CD8-positive, alpha-beta T cell (primary cell): ENCODE measurements at regions of chr2 and their contacts with region 1.

Region 1: DNA sequence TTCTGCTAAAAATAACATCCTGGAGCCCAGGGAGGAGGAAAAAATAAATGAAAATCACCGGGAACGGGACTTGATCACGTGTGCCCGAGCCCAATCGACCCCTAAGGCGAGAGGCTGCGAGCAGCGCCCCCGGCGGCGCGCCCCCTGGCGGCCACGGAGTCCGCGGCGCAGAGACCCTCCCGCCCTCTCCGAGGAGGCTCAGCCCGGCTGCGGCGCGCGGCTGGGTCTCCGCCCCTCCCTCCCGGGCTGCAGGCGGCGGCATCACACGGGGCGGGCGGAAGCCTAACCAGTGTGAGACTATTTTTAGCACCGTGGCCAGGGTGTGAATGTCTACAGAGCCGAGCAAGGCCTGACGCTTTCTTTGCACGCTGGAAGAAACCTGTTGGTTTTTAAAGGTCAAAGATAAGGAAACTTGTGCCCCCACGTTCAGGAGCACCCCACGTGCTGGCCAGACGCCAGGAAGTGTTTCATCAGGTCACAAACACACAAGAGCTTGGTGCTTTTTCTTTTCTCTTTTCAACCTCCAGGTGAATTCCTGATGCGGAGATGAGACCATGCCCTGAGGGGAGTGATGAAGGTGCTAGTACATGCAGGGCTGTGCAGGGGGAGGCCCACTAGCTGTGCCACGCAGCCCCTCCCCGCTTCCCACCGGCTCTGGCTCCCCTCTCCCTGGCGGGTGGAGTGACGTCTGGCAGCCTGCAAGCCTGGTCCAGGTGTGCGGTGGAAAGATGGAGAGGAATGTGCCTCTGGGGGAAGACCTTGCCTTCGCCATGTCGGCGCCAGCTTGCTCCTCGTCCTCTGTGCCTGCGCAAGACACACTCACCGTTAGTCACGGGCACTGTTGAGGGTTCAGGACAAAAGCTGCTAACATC is 35.3 kb upstream of the DNMT3A start:
- DNase-seq: peak; percentile 83 to 98 (median 92)
- ATAC-seq: peak; percentile 97
- H3K4me3 ChIP-seq: peak overlapping the region; percentile 11 to 36
- H3K4me3 Mint-ChIP-seq: peak overlapping the region; percentile 72
- H3K27ac ChIP-seq: peak overlapping the region; percentile 36 to 69
- H3K27ac Mint-ChIP-seq: peak overlapping the region; percentile 95
- H3K4me1 ChIP-seq: peaks cover 33% of the 10 kb centered on the region
- H3K4me1 Mint-ChIP-seq: peaks cover 35% of the 10 kb centered on the region
- H3K27me3 ChIP-seq: no peaks in the 10 kb centered on the region
- H3K27me3 Mint-ChIP-seq: no peaks in the 10 kb centered on the region
- CTCF ChIP-seq: peak; percentile 98

Region 2: GRCh38 chr2:25177211-25177611 is 199.8 kb before region 1 on chr2:
- CTCF ChIA-PET with region 1: no interaction called
- POLR2A ChIA-PET with region 1: no interaction called
- intact Hi-C with region 1: no loop called
- DNase-seq: no peak
- ATAC-seq: no peak
- H3K4me3 ChIP-seq: no peak overlapping the region
- H3K4me3 Mint-ChIP-seq: no peak overlapping the region
- H3K27ac ChIP-seq: no peak overlapping the region
- H3K27ac Mint-ChIP-seq: no peak overlapping the region
- H3K4me1 ChIP-seq: no peaks in the 10 kb centered on the region
- H3K4me1 Mint-ChIP-seq: no peaks in the 10 kb centered on the region
- H3K27me3 ChIP-seq: peaks cover 0 to 4% of the 10 kb centered on the region in 2 experiments
- H3K27me3 Mint-ChIP-seq: peaks cover 20% of the 10 kb centered on the region
- CTCF ChIP-seq: no peak

Region 3: DNA sequence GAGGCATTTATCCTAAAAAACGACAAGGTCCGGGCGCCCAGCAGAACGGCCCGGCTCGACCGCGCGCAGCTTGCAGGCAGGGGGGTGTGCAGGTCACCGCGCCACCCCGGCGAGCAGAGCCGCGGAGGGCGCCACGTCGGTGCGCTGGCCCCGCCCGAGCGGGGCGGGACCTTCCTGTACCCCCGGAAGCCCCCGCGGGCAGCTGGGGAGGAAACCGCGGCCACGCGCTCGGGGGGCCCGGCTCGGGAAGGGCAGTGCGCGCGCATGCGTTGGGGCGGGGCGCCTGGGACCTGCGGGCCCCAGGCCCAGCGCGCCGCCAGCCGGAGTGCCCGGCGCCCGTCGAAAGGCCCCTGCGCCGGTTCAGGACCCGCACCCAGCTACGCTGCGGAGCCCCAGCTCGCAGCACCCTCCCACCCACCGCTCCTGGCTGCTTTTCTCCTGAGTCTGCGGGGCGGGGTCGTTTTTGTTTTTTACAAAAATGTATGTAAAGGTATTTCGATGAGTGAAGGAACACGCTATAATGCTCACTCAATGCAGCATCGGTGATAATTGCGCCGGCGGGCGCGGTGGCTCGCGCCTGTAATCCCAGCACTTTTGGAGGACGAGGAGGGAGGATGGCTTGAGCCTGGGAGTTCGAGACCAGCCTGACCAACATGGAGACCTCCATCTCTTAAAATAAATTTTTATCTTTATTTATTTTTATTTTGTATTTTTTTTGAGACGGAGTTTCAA is 160.9 kb before region 1 on chr2:
- CTCF ChIA-PET with region 1: no interaction called
- POLR2A ChIA-PET with region 1: no interaction called
- intact Hi-C with region 1: loop called in 1 of 2 experiments (anchors 1 kb)
- DNase-seq: peak; percentile 64 to 96 (median 88)
- ATAC-seq: peak; percentile 95
- H3K4me3 ChIP-seq: peak overlapping the region; percentile 59 to 72
- H3K4me3 Mint-ChIP-seq: peak overlapping the region; percentile 77
- H3K27ac ChIP-seq: peak overlapping the region; percentile 68 to 72
- H3K27ac Mint-ChIP-seq: peak overlapping the region; percentile 80
- H3K4me1 ChIP-seq: peaks cover 7% of the 10 kb centered on the region
- H3K4me1 Mint-ChIP-seq: peaks cover 10% of the 10 kb centered on the region
- H3K27me3 ChIP-seq: no peaks in the 10 kb centered on the region
- H3K27me3 Mint-ChIP-seq: no peaks in the 10 kb centered on the region
- CTCF ChIP-seq: no peak

Region 4: GRCh38 chr2:25286025-25286400 is 91.0 kb before region 1 on chr2:
- CTCF ChIA-PET with region 1: interaction called, 10 read pairs
- POLR2A ChIA-PET with region 1: no interaction called
- intact Hi-C with region 1: no loop called
- DNase-seq: peak; percentile 45 to 88 (median 77)
- ATAC-seq: peak; percentile 99
- H3K4me3 ChIP-seq: peak overlapping the region; percentile 4 to 25
- H3K4me3 Mint-ChIP-seq: peak overlapping the region; percentile 60
- H3K27ac ChIP-seq: peak overlapping the region; percentile 72 to 78
- H3K27ac Mint-ChIP-seq: peak overlapping the region; percentile 98
- H3K4me1 ChIP-seq: peaks cover 70% of the 10 kb centered on the region
- H3K4me1 Mint-ChIP-seq: peaks cover 66% of the 10 kb centered on the region
- H3K27me3 ChIP-seq: no peaks in the 10 kb centered on the region
- H3K27me3 Mint-ChIP-seq: no peaks in the 10 kb centered on the region
- CTCF ChIP-seq: no peak

Region 5: DNA sequence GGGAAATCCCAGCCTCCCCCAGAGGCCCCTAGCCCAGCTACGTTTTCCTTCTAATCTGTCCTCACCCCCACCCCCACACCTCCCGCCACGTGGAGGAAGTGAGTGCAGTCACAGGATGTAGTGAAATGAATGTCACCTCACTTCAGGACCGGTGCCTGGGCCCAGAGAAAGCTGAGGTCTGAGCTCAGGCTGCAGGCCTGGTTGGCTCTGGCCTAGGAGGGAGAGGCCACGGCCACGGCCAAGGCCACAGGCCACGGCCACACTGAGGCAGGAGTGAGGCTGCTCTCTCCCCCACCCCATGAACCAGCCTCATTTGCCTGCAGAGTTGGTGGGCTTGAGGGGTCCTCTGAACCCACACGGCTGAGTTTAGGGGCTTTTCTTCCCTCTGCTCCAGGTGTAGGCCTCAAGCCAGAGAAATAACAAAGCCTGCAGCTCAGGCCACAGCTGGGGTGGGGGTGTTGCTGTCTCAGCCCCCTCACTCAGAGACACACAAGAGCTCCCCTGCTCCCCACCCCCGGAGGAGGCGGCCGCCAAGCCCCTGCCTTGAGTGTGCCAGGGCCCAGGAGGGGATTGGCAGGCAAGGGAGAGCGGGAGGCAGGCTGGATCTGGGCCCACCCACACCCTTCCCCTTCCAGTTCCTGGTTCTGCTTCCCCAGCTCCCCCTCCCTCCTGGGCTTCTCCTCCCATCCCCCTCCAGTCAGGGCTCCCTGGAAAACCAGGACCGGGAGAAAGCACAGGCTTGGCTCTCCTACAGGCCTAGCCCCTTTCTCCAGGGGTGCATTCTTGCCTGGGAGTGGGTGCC is 62.3 kb before region 1 on chr2:
- CTCF ChIA-PET with region 1: interaction called, 10 read pairs
- POLR2A ChIA-PET with region 1: interaction called, 4 read pairs
- intact Hi-C with region 1: loop called (anchors 1 kb)
- DNase-seq: peak; percentile 21 to 80 (median 69)
- ATAC-seq: peak; percentile 86
- H3K4me3 ChIP-seq: peak overlapping the region; percentile 34 to 46
- H3K4me3 Mint-ChIP-seq: peak overlapping the region; percentile 81
- H3K27ac ChIP-seq: peak overlapping the region; percentile 32 to 76
- H3K27ac Mint-ChIP-seq: peak overlapping the region; percentile 95
- H3K4me1 ChIP-seq: peaks cover 71% of the 10 kb centered on the region
- H3K4me1 Mint-ChIP-seq: peaks cover 66% of the 10 kb centered on the region
- H3K27me3 ChIP-seq: no peaks in the 10 kb centered on the region
- H3K27me3 Mint-ChIP-seq: no peaks in the 10 kb centered on the region
- CTCF ChIP-seq: no peak

Region 6: DNA sequence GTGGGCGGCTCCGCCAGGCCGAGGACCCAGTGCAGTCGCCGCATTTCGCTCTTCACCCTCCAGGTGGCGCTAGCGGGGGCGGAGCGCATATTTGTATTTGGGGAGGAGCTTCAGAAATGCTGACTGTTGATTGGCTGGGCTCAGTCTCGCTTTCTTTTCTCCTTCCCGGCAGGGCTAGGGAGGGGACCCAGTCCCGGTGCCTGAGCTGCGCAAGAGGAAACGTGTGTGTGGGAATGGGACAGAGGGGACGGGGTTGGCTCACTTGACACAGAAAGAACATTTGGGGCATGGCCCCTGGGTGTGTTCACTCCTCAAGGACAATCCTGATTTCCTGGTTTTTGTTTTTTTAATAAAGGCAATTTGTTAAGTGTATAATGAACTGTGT is 14.9 kb before region 1 on chr2:
- CTCF ChIA-PET with region 1: interaction called, 137 read pairs
- POLR2A ChIA-PET with region 1: interaction called, 37 read pairs
- intact Hi-C with region 1: loop called (anchors 1 kb)
- DNase-seq: peak; percentile 87 to 99 (median 94)
- ATAC-seq: peak; percentile 94
- H3K4me3 ChIP-seq: peak overlapping the region; percentile 65 to 73
- H3K4me3 Mint-ChIP-seq: peak overlapping the region; percentile 89
- H3K27ac ChIP-seq: peak overlapping the region; percentile 49 to 84
- H3K27ac Mint-ChIP-seq: peak overlapping the region; percentile 94
- H3K4me1 ChIP-seq: peaks cover 15% of the 10 kb centered on the region
- H3K4me1 Mint-ChIP-seq: peaks cover 20% of the 10 kb centered on the region
- H3K27me3 ChIP-seq: no peaks in the 10 kb centered on the region
- H3K27me3 Mint-ChIP-seq: no peaks in the 10 kb centered on the region
- CTCF ChIP-seq: peak; percentile 94

Region 7: DNA sequence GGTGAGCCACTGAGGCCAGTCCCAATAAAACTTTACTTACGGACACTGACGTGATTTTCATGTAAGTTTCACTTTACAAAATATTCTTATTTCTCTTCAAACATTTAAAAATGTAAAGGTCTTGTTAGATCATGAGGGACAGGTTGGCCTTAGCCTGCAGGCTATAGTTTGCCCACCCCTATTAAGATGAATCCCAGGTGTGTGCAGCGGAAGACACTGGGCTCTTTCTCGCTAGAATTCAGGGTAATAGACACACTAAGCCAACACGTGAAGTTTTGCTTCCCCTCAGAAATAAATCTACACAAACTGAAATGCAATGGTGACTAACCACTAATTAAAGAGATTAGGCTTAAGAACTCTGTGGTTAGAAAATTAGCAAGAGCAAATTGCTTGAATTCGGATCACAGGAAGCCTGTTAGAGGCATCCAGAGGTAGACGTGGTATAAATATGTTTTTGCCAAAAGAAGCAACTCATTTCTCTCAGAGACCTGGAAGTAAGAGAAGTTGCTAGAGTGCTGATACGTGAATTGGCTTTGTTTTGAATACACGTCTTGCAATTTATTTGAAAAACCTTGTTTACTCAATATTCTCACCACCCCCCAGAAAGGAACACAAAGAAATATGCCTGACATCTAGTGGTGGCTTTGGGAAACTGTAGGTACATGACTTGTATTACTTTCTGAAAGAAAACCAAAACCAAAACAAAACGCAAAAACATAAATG is 144.8 kb after region 1 on chr2:
- CTCF ChIA-PET with region 1: no interaction called
- POLR2A ChIA-PET with region 1: no interaction called
- intact Hi-C with region 1: loop called (anchors 2 kb)
- DNase-seq: peak in 7 of 9 experiments; percentile 3 to 88 (median 25)
- ATAC-seq: peak; percentile 100
- H3K4me3 ChIP-seq: no peak overlapping the region
- H3K4me3 Mint-ChIP-seq: peak overlapping the region; percentile 30
- H3K27ac ChIP-seq: peak overlapping the region in 1 of 2 experiments; percentile 51
- H3K27ac Mint-ChIP-seq: peak overlapping the region; percentile 46
- H3K4me1 ChIP-seq: peaks cover 4% of the 10 kb centered on the region
- H3K4me1 Mint-ChIP-seq: peaks cover 7% of the 10 kb centered on the region
- H3K27me3 ChIP-seq: no peaks in the 10 kb centered on the region
- H3K27me3 Mint-ChIP-seq: no peaks in the 10 kb centered on the region
- CTCF ChIP-seq: peak; percentile 78